ENCODE measurements at regions of chr19 and their contacts with region 1.

Region 1: GRCh38 chr19:10653715-10654492 is at the start of gene ILF3:
- DNase-seq: peak; percentile 97 to 100
- H3K4me3 ChIP-seq: peak within 1 kb of the TSS; percentile 99 to 100 (median 100)
- H3K27ac ChIP-seq: peak within 1 kb of the TSS; percentile 98
- H3K4me1 ChIP-seq: 0 out of 7 replicates have a peak, but pooled peaks cover 0 to 2% (median 0%) of the 10 kb centered on the region in 4 experiments
- H3K27me3 ChIP-seq: no peaks in the 10 kb centered on the region
- CTCF ChIP-seq: no peak
- EP300 ChIP-seq: peak in 1 of 2 experiments; percentile 48; a peak in 1 of 3 replicates
- POLR2A ChIP-seq: peak; percentile 69 to 89
- RAD21 ChIP-seq: no peak
- total RNA-seq, gene ILF3: 675 and 695 TPM in 2 replicates

Region 2: GRCh38 chr19:10568826-10569651 is 84.9 kb before region 1 on chr19 and contains the start of gene CDKN2D:
- CTCF ChIA-PET with region 1: interaction called, 4 read pairs
- POLR2A ChIA-PET with region 1: interaction called, 14 read pairs
- DNase-seq: peak; percentile 99
- H3K4me3 ChIP-seq: peak within 1 kb of the TSS; percentile 58 to 71 (median 70)
- H3K27ac ChIP-seq: peak within 1 kb of the TSS; percentile 79
- H3K4me1 ChIP-seq: peaks cover 0 to 19% (median 9%) of the 10 kb centered on the region in 4 experiments; a peak in 6 of 7 replicates
- H3K27me3 ChIP-seq: peaks cover 0 to 10% (median 7%) of the 10 kb centered on the region in 4 experiments; a peak in 4 of 7 replicates
- CTCF ChIP-seq: no peak
- EP300 ChIP-seq: no peak
- POLR2A ChIP-seq: peak; percentile 64 to 65
- RAD21 ChIP-seq: no peak
- total RNA-seq, gene CDKN2D: 2.6 and 3.0 TPM in 2 replicates

Region 3: GRCh38 chr19:10593820-10594637 is 59.9 kb before region 1 on chr19:
- CTCF ChIA-PET with region 1: no interaction called
- POLR2A ChIA-PET with region 1: interaction called, 20 read pairs
- DNase-seq: no peak
- H3K4me3 ChIP-seq: no peak overlapping the region
- H3K27ac ChIP-seq: no peak overlapping the region
- H3K4me1 ChIP-seq: no peaks in the 10 kb centered on the region
- H3K27me3 ChIP-seq: no peaks in the 10 kb centered on the region
- CTCF ChIP-seq: no peak
- EP300 ChIP-seq: no peak
- POLR2A ChIP-seq: no peak
- RAD21 ChIP-seq: no peak

Region 4: GRCh38 chr19:10602330-10603083 is 51.4 kb before region 1 on chr19:
- CTCF ChIA-PET with region 1: interaction called, 6 read pairs
- POLR2A ChIA-PET with region 1: interaction called, 19 read pairs
- DNase-seq: peak in 1 of 2 experiments; percentile 89
- H3K4me3 ChIP-seq: peak overlapping the region; percentile 79 to 98 (median 88)
- H3K27ac ChIP-seq: 0 out of 2 replicates have a peak overlapping the region, but pooled peaks have one; percentile 67
- H3K4me1 ChIP-seq: peaks cover 0 to 11% (median 7%) of the 10 kb centered on the region in 4 experiments; a peak in 6 of 7 replicates
- H3K27me3 ChIP-seq: no peaks in the 10 kb centered on the region
- CTCF ChIP-seq: no peak
- EP300 ChIP-seq: no peak
- POLR2A ChIP-seq: peak in 1 of 2 experiments; percentile 59; a peak in 2 of 3 replicates
- RAD21 ChIP-seq: no peak

Region 5: GRCh38 chr19:10625003-10625776 is 28.7 kb before region 1 on chr19 and contains the start of gene SLC44A2:
- CTCF ChIA-PET with region 1: no interaction called
- POLR2A ChIA-PET with region 1: interaction called, 19 read pairs
- DNase-seq: peak in 1 of 2 experiments; percentile 90
- H3K4me3 ChIP-seq: peak within 1 kb of the TSS; percentile 84 to 92 (median 87)
- H3K27ac ChIP-seq: peak within 1 kb of the TSS; percentile 83
- H3K4me1 ChIP-seq: peaks cover 4 to 9% (median 8%) of the 10 kb centered on the region in 4 experiments
- H3K27me3 ChIP-seq: no peaks in the 10 kb centered on the region
- CTCF ChIP-seq: peak in 1 of 3 experiments; percentile 8; a peak in 1 of 4 replicates
- EP300 ChIP-seq: peak in 1 of 2 experiments; percentile 84; a peak in 1 of 3 replicates
- POLR2A ChIP-seq: peak; percentile 62 to 98
- RAD21 ChIP-seq: peak in 1 of 2 experiments; percentile 6; a peak in 1 of 4 replicates
- total RNA-seq, gene SLC44A2: 118 and 120 TPM in 2 replicates

Region 6: DNA sequence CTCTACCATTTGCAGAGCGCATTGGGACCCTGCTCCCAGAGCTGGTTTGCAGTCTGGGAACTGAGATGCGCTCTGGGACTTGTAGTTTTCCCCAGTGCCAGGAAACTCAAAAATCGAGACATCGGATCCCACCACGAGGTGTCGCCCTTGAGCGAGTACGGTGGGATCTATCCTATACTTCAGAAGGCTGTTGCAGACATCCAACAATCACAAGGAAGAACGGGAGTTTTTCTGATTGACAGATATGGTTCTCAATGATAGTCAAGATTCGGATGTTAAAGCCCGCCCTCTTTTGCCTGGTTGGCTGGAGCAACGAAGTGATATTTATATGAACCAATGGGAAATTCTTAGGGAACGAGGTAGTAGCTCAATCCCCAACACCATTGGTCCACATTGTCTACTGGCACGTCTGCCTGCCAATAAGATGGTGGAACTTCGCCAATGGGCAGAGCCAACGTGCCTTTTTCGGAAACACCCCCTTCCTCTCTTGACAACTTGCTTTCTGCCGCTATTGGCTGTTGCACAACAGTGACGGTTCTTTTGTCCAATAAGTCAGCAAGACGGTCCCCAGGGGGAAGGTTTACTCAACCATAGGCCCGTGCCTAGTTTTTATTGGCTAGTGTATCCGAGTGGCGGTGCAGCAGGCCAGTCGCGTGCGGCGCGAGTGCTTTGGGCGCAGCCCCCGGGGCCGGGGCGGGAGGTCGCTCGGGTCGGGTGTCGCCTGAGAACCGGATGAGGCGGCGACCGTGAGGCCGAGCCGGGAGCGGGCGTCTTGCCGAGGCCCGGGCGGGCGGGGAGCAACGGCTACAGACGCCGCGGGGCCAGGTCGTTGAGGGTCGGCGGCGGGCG is 63.7 kb after region 1 on chr19 and contains the start of gene DNM2:
- CTCF ChIA-PET with region 1: no interaction called
- POLR2A ChIA-PET with region 1: interaction called, 1,874 read pairs
- DNase-seq: peak; percentile 99 to 100
- H3K4me3 ChIP-seq: peak within 1 kb of the TSS; percentile 89 to 95 (median 92)
- H3K27ac ChIP-seq: peak within 1 kb of the TSS; percentile 67; the same call in 1 of the 2 replicates
- H3K4me1 ChIP-seq: peaks cover 0 to 14% (median 6%) of the 10 kb centered on the region in 4 experiments; a peak in 5 of 7 replicates
- H3K27me3 ChIP-seq: no peaks in the 10 kb centered on the region
- CTCF ChIP-seq: peak; percentile 72 to 96 (median 78)
- EP300 ChIP-seq: peak in 1 of 2 experiments; percentile 78; a peak in 1 of 3 replicates
- POLR2A ChIP-seq: peak in 1 of 2 experiments; percentile 40; a peak in 1 of 3 replicates
- RAD21 ChIP-seq: peak; percentile 67 to 71
- total RNA-seq, gene DNM2: 120 TPM in 2 replicates

Region 7: GRCh38 chr19:10742476-10742875 is 88.6 kb after region 1 on chr19:
- CTCF ChIA-PET with region 1: no interaction called
- POLR2A ChIA-PET with region 1: no interaction called
- DNase-seq: no peak
- H3K4me3 ChIP-seq: no peak overlapping the region
- H3K27ac ChIP-seq: no peak overlapping the region
- H3K4me1 ChIP-seq: peaks cover 0 to 5% (median 1%) of the 10 kb centered on the region in 4 experiments; a peak in 2 of 7 replicates
- H3K27me3 ChIP-seq: no peaks in the 10 kb centered on the region
- CTCF ChIP-seq: no peak
- EP300 ChIP-seq: no peak
- POLR2A ChIP-seq: no peak
- RAD21 ChIP-seq: no peak

Measured in H1 (cell line).